Endothelial cell of umbilical vein (primary cell): ENCODE measurements at regions of chr20 and their contacts with region 1.

Region 1: DNA sequence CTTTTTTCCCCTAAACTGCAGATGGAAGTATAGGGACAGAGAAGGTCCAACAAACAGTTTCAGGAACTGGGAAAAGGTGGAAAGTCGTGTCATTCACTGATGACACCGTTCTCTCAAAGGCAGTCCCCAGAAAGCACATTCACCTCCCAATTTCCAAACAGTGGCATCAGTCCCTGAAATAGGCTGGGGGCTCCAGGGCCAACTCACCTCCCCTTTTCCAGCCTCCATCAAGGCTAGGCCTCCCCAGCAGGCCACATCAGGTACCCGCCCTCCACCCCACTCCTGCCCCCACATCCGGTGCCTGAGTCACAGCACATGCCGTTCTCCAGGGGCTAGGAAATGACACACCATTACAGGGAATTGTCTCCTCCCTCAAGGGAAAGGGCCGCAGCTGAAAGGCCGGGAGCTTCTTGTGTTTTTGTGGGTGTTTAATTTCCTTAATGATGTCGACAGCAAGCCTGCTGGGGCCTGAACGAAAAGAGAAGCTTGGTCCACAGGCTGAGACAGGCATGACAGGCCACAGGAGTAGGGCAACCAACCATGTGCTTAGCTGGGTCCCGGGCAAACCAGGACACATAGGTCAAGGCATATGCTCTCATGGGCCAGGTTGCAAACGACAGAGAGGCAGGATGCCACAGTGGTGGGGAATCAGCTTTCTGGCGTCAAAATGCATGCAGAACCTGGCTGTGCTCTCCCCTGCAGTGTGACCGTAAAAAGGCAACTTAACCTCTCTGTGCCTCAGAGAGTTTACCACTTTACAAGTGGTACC is 39.2 kb downstream of the ZMYND8 start:
- DNase-seq: peak; percentile 97
- H3K4me3 ChIP-seq: peak overlapping the region in 1 of 3 experiments; percentile 15
- H3K27ac ChIP-seq: peak overlapping the region; percentile 86
- H3K4me1 ChIP-seq: peaks cover 67% of the 10 kb centered on the region
- H3K27me3 ChIP-seq: no peaks in the 10 kb centered on the region
- CTCF ChIP-seq: no peak
- POLR2A ChIP-seq: peak; percentile 90

Region 2: DNA sequence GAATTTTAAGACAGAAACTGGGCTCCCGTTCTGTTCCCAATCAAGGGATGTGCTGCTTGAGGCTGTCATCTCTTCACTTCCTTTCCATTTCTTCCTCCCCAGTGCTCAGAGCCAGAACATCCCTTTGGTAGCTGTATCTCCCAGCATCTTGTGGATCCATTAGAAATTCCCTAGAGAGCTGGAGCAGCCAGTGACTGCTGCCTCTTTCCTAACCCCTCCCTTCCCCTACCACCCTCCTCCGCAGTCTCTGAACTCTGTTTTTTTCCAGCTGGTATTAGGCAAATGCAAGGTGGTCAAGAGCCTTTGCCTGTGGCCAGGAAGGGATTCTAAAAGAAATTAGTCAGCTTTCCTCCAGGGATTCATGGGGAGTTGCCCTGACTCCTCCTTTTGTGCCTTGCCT is 214.7 kb before region 1 on chr20:
- CTCF ChIA-PET with region 1: no interaction called
- POLR2A ChIA-PET with region 1: no interaction called
- dilution Hi-C with region 1: no loop called
- intact Hi-C with region 1: no loop called
- DNase-seq: no peak
- H3K4me3 ChIP-seq: no peak overlapping the region
- H3K27ac ChIP-seq: no peak overlapping the region
- H3K4me1 ChIP-seq: no peaks in the 10 kb centered on the region
- H3K27me3 ChIP-seq: no peaks in the 10 kb centered on the region
- CTCF ChIP-seq: no peak
- POLR2A ChIP-seq: no peak

Region 3: DNA sequence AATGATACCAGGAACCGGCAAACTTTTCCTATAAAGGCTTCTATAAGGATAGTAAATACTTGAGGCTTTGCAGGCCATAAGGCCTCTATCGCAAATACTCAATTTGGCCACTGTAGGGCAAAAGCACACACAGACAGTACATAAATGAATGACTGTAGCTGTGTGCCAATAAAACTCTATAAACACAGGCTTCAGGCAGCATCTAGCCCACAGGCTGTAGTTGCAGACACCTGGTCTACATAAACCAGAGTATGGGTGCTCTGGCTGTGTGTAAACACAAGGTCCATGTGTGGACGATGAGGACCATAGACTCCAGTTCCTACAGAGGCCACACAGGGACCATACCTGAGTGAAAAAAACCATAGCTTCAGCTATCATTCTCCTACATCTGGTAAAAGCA is 13.0 kb before region 1 on chr20:
- CTCF ChIA-PET with region 1: interaction called, 10 read pairs
- POLR2A ChIA-PET with region 1: interaction called, 12 read pairs
- dilution Hi-C with region 1: no loop called
- intact Hi-C with region 1: no loop called
- DNase-seq: peak; percentile 57
- H3K4me3 ChIP-seq: no peak overlapping the region
- H3K27ac ChIP-seq: peak overlapping the region; percentile 19
- H3K4me1 ChIP-seq: peaks cover 20% of the 10 kb centered on the region
- H3K27me3 ChIP-seq: no peaks in the 10 kb centered on the region
- CTCF ChIP-seq: peak in 1 of 2 donors; percentile 5
- POLR2A ChIP-seq: no peak

Region 4: DNA sequence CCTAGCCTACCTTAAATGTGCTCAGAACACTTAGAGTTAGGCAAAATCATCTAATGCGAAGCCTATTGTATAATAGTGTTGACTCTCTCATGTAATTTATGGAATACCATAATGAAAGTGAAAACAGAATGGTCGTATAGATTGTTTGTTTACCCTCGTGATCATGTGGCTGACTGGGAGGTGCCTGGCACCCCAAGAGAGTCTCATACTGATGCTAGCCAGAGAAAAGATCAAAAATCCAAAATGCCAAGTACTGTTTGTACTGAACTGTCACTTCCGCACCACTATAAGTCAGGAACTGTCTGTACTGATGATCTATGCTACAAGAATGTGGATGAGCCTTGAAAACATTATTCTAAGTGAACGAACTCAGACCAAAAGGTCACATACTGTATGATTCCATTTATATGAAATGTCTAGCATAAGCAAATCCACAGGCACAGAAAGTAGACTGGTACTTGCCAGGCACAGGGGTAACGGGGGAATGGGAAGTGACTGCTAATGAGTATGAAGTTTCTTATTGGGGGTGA is 16.8 kb after region 1 on chr20:
- CTCF ChIA-PET with region 1: interaction called, 5 read pairs
- POLR2A ChIA-PET with region 1: interaction called, 9 read pairs
- dilution Hi-C with region 1: no loop called
- intact Hi-C with region 1: loop called (anchors 1 kb)
- DNase-seq: peak; percentile 96
- H3K4me3 ChIP-seq: peak overlapping the region in 1 of 3 experiments; percentile 58
- H3K27ac ChIP-seq: peak overlapping the region; percentile 56
- H3K4me1 ChIP-seq: peaks cover 56% of the 10 kb centered on the region
- H3K27me3 ChIP-seq: no peaks in the 10 kb centered on the region
- CTCF ChIP-seq: no peak
- POLR2A ChIP-seq: peak; percentile 87

Region 5: DNA sequence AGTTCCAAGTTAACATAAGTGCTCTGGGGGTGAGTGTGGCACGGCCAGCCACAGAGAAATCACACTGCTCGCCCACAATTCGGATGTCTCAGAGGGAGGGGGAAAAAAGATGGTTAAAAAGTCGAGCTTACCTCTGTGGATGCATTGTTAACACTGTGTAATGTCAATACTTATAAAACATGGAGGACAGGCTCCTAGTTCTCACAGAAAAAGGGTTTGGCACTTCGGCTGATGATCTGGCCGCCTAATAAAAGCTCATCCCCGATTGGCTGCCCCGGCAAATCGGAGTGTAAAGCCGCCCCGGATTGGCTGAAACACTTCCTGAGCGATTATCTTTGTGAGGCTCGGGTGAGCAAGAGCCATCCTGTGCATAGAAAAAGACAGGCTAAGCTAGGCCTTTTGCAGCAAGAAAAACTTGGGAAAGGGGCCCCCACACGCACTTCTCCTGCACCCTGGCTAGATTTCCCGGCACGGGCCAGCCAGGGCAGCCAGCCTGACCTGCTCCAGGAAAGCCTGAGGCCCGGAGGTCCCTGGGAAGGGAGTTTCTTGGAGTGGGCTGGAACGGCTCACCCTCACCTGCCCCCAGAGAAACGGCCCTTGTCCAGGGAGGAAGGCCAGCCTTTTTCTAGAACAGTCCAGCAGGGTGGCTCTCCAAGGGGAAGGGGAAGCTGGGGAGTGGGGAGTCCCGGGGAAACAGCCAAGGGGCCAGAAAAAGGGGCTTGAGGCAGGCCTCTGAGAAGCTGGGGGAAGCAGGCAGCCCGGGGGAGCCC is 39.4 kb after region 1 on chr20 and contains the start of gene ZMYND8:
- CTCF ChIA-PET with region 1: interaction called, 34 read pairs
- POLR2A ChIA-PET with region 1: interaction called, 60 read pairs
- dilution Hi-C with region 1: no loop called
- intact Hi-C with region 1: loop called (anchors 1 kb)
- DNase-seq: peak; percentile 98
- H3K4me3 ChIP-seq: peak within 1 kb of the TSS; percentile 16 to 82 (median 35)
- H3K27ac ChIP-seq: peak within 1 kb of the TSS; percentile 97
- H3K4me1 ChIP-seq: peaks cover 94% of the 10 kb centered on the region
- H3K27me3 ChIP-seq: no peaks in the 10 kb centered on the region
- CTCF ChIP-seq: no peak
- POLR2A ChIP-seq: peak; percentile 9
- total RNA-seq, gene ZMYND8: 75.2 and 76.3 TPM in 2 replicates

Region 6: GRCh38 chr20:47576516-47577033 is 259.3 kb after region 1 on chr20:
- CTCF ChIA-PET with region 1: no interaction called
- POLR2A ChIA-PET with region 1: no interaction called
- dilution Hi-C with region 1: no loop called
- intact Hi-C with region 1: no loop called
- DNase-seq: peak; percentile 95
- H3K4me3 ChIP-seq: peak overlapping the region in 1 of 3 experiments; percentile 58
- H3K27ac ChIP-seq: peak overlapping the region; percentile 55
- H3K4me1 ChIP-seq: peaks cover 60% of the 10 kb centered on the region
- H3K27me3 ChIP-seq: no peaks in the 10 kb centered on the region
- CTCF ChIP-seq: no peak
- POLR2A ChIP-seq: peak; percentile 80

Region 7: GRCh38 chr20:48921151-48921898 is 1604.0 kb after region 1 on chr20 and contains the start of gene ARFGEF2:
- CTCF ChIA-PET with region 1: no interaction called
- POLR2A ChIA-PET with region 1: no interaction called
- dilution Hi-C with region 1: no loop called
- intact Hi-C with region 1: loop called (anchors 10 kb)
- DNase-seq: peak; percentile 93
- H3K4me3 ChIP-seq: peak within 1 kb of the TSS; percentile 56 to 82 (median 78)
- H3K27ac ChIP-seq: peak within 1 kb of the TSS; percentile 94
- H3K4me1 ChIP-seq: peaks cover 25% of the 10 kb centered on the region
- H3K27me3 ChIP-seq: no peaks in the 10 kb centered on the region
- CTCF ChIP-seq: no peak
- POLR2A ChIP-seq: no peak
- total RNA-seq, gene ARFGEF2: 26.1 and 32.6 TPM in 2 replicates